Heart left ventricle (tissue), 16 donors: ENCODE measurements at regions of chr17 and their contacts with region 1.

Region 1: GRCh38 chr17:50541716-50542688 is 5.0 kb upstream of the SPATA20 start:
- DNase-seq: peak; percentile 88 to 96 (median 89)
- ATAC-seq: peak; percentile 65 to 93 (median 90)
- H3K4me3 ChIP-seq: peak overlapping the region; percentile 27 to 86 (median 64)
- H3K27ac ChIP-seq: peak overlapping the region in 11 of 12 donors; percentile 56 to 89 (median 82)
- H3K4me1 ChIP-seq: peaks cover 0 to 42% (median 21%) of the 10 kb centered on the region in 12 donors
- H3K27me3 ChIP-seq: peaks cover 0 to 2% (median 0%) of the 10 kb centered on the region in 9 donors
- CTCF ChIP-seq: peak in 6 of 12 donors; percentile 12 to 50 (median 33)
- POLR2A ChIP-seq: peak in 1 of 2 donors; percentile 86

Region 2: DNA sequence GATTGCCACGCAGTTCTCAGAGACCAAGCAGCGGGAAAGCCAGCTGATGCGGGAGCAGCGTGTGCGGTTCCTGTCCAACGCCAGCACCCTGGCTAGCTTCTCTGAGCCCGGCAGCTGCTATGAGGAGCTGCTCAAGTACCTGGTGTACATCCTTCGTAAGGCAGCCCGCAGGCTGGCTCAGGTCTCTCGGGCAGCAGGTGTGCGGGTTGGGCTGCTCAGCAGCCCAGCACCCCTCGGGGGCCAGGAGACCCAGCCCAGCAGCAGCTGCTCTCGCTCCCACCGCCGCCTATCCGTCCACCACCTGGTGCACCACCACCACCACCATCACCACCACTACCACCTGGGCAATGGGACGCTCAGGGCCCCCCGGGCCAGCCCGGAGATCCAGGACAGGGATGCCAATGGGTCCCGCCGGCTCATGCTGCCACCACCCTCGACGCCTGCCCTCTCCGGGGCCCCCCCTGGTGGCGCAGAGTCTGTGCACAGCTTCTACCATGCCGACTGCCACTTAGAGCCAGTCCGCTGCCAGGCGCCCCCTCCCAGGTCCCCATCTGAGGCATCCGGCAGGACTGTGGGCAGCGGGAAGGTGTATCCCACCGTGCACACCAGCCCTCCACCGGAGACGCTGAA is 33.7 kb after region 1 on chr17:
- intact Hi-C with region 1: no loop called
- DNase-seq: no peak
- ATAC-seq: no peak
- H3K4me3 ChIP-seq: no peak overlapping the region
- H3K27ac ChIP-seq: no peak overlapping the region
- H3K4me1 ChIP-seq: no peaks in the 10 kb centered on the region
- H3K27me3 ChIP-seq: no peaks in the 10 kb centered on the region
- CTCF ChIP-seq: no peak
- POLR2A ChIP-seq: no peak

Region 3: GRCh38 chr17:50596191-50597037 is 54.4 kb after region 1 on chr17:
- intact Hi-C with region 1: no loop called
- DNase-seq: no peak
- ATAC-seq: no peak
- H3K4me3 ChIP-seq: no peak overlapping the region
- H3K27ac ChIP-seq: no peak overlapping the region
- H3K4me1 ChIP-seq: peaks cover 0 to 10% (median 0%) of the 10 kb centered on the region in 12 donors
- H3K27me3 ChIP-seq: no peaks in the 10 kb centered on the region
- CTCF ChIP-seq: peak in 5 of 12 donors; percentile 6 to 30 (median 17)
- POLR2A ChIP-seq: no peak

Region 4: DNA sequence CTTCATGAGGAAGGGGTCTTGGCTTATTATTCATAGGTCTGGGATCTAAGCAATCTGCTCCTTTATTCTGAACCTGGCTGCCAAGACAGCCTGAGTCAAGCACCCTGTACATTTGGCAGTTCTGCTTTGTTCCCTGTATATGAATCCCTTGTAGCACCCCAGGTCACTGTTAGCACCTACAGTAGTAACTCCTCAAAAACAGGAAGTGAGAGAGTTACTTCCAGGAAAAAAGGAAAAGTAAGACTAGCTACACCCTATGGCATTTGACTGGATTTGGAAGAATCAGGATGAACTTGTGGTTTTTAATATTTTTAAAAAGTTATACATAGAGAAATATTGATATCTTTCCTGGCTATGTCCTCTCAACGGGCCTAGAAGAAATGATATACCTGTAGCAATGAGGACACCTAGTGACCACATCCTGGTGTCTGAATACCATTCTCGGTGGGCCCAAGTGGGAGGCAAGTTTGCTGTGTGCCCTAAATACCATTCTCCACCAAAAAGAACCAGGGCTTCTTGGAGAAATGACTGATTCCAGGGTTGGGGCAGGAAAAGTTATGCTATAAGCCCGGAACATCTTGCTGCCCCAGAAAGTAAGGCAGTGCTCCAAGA is 155.8 kb after region 1 on chr17:
- intact Hi-C with region 1: loop called in 7 of 10 experiments (anchors 5 kb)
- DNase-seq: no peak
- ATAC-seq: no peak
- H3K4me3 ChIP-seq: no peak overlapping the region
- H3K27ac ChIP-seq: no peak overlapping the region
- H3K4me1 ChIP-seq: peaks cover 0 to 35% (median 20%) of the 10 kb centered on the region in 12 donors
- H3K27me3 ChIP-seq: no peaks in the 10 kb centered on the region
- CTCF ChIP-seq: no peak
- POLR2A ChIP-seq: no peak

Region 5: GRCh38 chr17:50893183-50893993 is 351.4 kb after region 1 on chr17:
- intact Hi-C with region 1: no loop called
- DNase-seq: peak in 1 of 5 donors; percentile 44
- ATAC-seq: peak in 3 of 4 donors; percentile 41 to 65 (median 49)
- H3K4me3 ChIP-seq: no peak overlapping the region
- H3K27ac ChIP-seq: peak overlapping the region in 1 of 12 donors; percentile 76
- H3K4me1 ChIP-seq: peaks cover 0 to 9% (median 0%) of the 10 kb centered on the region in 12 donors
- H3K27me3 ChIP-seq: no peaks in the 10 kb centered on the region
- CTCF ChIP-seq: no peak
- POLR2A ChIP-seq: no peak

Region 6: DNA sequence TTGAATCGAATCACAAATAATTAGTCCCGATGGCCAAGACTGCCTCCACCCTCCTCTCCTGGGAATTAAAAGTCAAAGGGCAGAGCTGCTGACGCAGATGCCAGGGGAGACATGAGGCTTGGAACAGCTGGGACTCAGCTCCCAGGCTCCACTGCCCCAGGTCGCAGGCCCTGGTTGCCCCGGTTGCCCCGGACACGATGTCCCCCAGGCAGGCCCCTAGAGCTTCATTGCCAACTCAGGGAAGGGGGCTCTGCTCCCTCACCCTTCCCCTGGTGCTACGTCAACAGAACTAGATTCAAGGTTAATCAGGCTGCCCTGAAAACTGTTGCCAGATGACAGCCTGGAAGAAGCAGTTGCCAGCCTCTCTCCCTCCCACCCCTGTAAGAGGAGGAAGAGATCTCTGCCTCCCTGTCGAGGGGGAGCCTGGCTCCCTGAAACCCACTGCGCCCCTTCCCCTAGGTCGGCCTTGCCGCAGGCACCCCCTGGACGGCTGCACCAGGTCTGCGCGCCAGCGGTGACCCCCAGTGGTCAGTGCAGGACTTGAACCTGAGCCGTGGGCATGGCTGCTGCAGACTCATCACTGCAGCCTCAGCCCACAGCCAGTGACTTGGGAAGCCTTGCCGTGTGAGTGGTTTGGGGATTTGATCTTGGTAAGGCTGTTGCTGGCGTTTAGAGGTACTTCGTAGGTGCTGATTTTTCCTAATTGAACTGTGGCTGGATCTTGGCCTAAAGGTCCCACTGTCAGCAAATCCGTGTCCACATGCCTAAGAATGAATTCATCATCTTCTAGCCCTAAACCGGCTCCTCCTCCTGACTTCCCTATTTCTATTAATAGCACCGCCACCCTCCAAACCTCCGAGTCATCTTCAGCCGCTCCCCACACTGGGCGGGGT is 408.2 kb after region 1 on chr17:
- intact Hi-C with region 1: loop called in 4 of 10 experiments (anchors 5 to 10 kb)
- DNase-seq: peak; percentile 77 to 90 (median 86)
- ATAC-seq: peak; percentile 78 to 88 (median 86)
- H3K4me3 ChIP-seq: peak overlapping the region in 3 of 12 donors; percentile 0 to 16 (median 2)
- H3K27ac ChIP-seq: peak overlapping the region; percentile 71 to 91 (median 82)
- H3K4me1 ChIP-seq: peaks cover 0 to 67% (median 46%) of the 10 kb centered on the region in 12 donors
- H3K27me3 ChIP-seq: no peaks in the 10 kb centered on the region
- CTCF ChIP-seq: peak; percentile 62 to 87 (median 81)
- POLR2A ChIP-seq: no peak